Activated CD8-positive, alpha-beta T cell treated with anti-CD3 and anti-CD28 coated beads, Interleukin-2, amount 10 ng/mL, durations not matched to agents 7 days and 5 days (primary cell): ENCODE measurements at regions of chr9 and their contacts with region 1.

Region 1: DNA sequence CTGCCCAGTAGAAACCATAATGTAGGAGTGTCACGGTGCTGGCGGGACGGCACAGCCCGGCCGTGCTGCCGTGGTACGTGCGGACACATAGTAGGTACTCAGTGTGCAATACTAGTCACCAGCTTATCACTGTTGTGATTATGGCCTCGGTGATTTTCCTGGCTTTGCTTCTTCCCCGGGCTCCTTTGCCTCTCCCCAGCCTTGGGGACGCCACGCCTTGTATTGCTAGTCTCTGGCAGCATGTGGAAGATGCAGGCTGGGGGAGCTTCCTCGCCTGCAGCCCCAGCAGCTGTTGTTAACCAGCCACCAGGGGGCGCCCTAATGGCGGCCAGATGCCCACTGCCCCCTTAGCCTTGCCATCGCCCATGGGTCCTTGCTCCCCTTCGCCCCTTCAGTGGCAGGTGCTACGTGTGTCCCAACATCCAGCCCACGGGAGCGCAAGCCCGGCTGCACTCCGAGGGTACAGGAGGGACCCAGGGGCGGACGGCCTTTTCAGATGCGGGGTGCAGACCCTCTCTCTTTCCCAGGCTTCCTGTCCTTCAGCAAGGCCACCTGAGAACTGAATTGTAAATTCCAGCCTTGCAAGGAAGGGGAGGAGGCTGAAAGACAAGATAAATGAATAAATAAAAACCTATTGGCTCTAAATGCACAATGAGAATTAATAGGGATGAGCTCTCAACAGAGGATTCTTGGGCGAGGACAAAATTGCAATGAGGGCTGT is 8.0 kb downstream of the NTNG2 start:
- DNase-seq: peak; percentile 73
- ATAC-seq: peak; percentile 72
- H3K4me3 Mint-ChIP-seq: no peak overlapping the region
- H3K27ac Mint-ChIP-seq: no peak overlapping the region
- H3K4me1 Mint-ChIP-seq: no peaks in the 10 kb centered on the region
- H3K27me3 Mint-ChIP-seq: peaks cover 26% of the 10 kb centered on the region

Region 2: DNA sequence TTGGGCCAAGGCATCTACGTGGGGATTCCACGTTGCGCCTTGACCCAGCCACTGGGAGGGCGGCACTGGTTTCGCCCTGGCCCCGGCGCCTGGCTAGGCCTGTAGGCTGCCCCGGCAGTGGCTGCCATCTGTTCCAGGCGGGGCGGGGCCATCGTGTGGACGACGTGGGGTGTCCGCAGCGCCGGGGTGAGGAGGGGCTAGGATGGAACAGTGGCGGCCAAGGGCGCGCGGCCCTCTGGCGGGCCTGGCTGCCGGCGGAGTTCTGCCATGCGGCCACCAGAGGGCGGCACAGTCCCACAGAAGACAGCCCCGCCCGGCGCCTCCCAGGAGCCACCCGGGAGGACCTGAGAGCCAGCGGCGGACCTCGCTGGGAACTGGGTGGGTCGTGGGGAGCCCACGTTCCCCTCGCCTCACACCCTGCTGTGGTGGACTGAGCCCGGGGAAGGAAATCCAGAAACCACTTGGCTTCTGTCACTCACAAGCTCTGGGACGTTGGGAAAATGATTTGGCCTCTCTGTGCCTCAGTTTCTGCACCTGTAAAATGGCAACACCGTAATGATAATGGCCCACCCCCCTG is 407.4 kb before region 1 on chr9:
- CTCF ChIA-PET with region 1: interaction called, 10 read pairs
- POLR2A ChIA-PET with region 1: interaction called, 4 read pairs
- DNase-seq: peak; percentile 75
- ATAC-seq: peak; percentile 92
- H3K4me3 Mint-ChIP-seq: no peak overlapping the region
- H3K27ac Mint-ChIP-seq: no peak overlapping the region
- H3K4me1 Mint-ChIP-seq: no peaks in the 10 kb centered on the region
- H3K27me3 Mint-ChIP-seq: peaks cover 22% of the 10 kb centered on the region